Mammary epithelial cell (primary cell): ENCODE measurements at regions of chr1 and their contacts with region 1.

Region 1: GRCh38 chr1:181142096-181142958 is 53.8 kb downstream of the IER5 start:
- DNase-seq: peak; percentile 84
- H3K4me3 ChIP-seq: peak overlapping the region in 1 of 3 experiments; percentile 33
- H3K27ac ChIP-seq: peak overlapping the region; percentile 63
- H3K4me1 ChIP-seq: peaks cover 49% of the 10 kb centered on the region
- H3K27me3 ChIP-seq: no peaks in the 10 kb centered on the region
- CTCF ChIP-seq: peak; percentile 95 to 97

Region 2: GRCh38 chr1:180881806-180882509 is 260.4 kb before region 1 on chr1:
- CTCF ChIA-PET with region 1: no interaction called
- dilution Hi-C with region 1: no loop called
- in situ Hi-C with region 1: no loop called
- intact Hi-C with region 1: loop called (anchors 1 kb)
- DNase-seq: peak; percentile 16
- H3K4me3 ChIP-seq: no peak overlapping the region
- H3K27ac ChIP-seq: no peak overlapping the region
- H3K4me1 ChIP-seq: no peaks in the 10 kb centered on the region
- H3K27me3 ChIP-seq: no peaks in the 10 kb centered on the region
- CTCF ChIP-seq: peak; percentile 33 to 44

Region 3: GRCh38 chr1:181033799-181034451 is 108.4 kb before region 1 on chr1 and contains the start of gene MR1:
- CTCF ChIA-PET with region 1: interaction called, 6 read pairs
- dilution Hi-C with region 1: no loop called
- in situ Hi-C with region 1: no loop called
- intact Hi-C with region 1: loop called (anchors 1 kb)
- DNase-seq: peak; percentile 86
- H3K4me3 ChIP-seq: peak within 1 kb of the TSS; percentile 61 to 62 (median 62)
- H3K27ac ChIP-seq: peak within 1 kb of the TSS; percentile 94
- H3K4me1 ChIP-seq: peaks cover 21% of the 10 kb centered on the region
- H3K27me3 ChIP-seq: no peaks in the 10 kb centered on the region
- CTCF ChIP-seq: no peak
- total RNA-seq, gene MR1: 20.4 to 46.3 TPM

Region 4: GRCh38 chr1:181044449-181044966 is 97.8 kb before region 1 on chr1:
- CTCF ChIA-PET with region 1: interaction called, 5 read pairs
- dilution Hi-C with region 1: no loop called
- in situ Hi-C with region 1: loop called (anchors 5 kb)
- intact Hi-C with region 1: no loop called
- DNase-seq: peak; percentile 97
- H3K4me3 ChIP-seq: peak overlapping the region in 1 of 3 experiments; percentile 7
- H3K27ac ChIP-seq: peak overlapping the region; percentile 65
- H3K4me1 ChIP-seq: peaks cover 30% of the 10 kb centered on the region
- H3K27me3 ChIP-seq: no peaks in the 10 kb centered on the region
- CTCF ChIP-seq: no peak

Region 5: GRCh38 chr1:181112071-181112929 is 30.0 kb before region 1 on chr1:
- CTCF ChIA-PET with region 1: no interaction called
- dilution Hi-C with region 1: no loop called
- in situ Hi-C with region 1: no loop called
- intact Hi-C with region 1: loop called (anchors 1 kb)
- DNase-seq: peak; percentile 100
- H3K4me3 ChIP-seq: no peak overlapping the region
- H3K27ac ChIP-seq: peak overlapping the region; percentile 79
- H3K4me1 ChIP-seq: peaks cover 51% of the 10 kb centered on the region
- H3K27me3 ChIP-seq: no peaks in the 10 kb centered on the region
- CTCF ChIP-seq: no peak

Region 6: GRCh38 chr1:181159451-181160140 is 17.3 kb after region 1 on chr1:
- CTCF ChIA-PET with region 1: interaction called, 3 read pairs
- dilution Hi-C with region 1: no loop called
- in situ Hi-C with region 1: no loop called
- intact Hi-C with region 1: loop called (anchors 1 kb)
- DNase-seq: peak; percentile 97
- H3K4me3 ChIP-seq: no peak overlapping the region
- H3K27ac ChIP-seq: peak overlapping the region; percentile 65
- H3K4me1 ChIP-seq: peaks cover 22% of the 10 kb centered on the region
- H3K27me3 ChIP-seq: no peaks in the 10 kb centered on the region
- CTCF ChIP-seq: no peak